GM10248 (cell line): ENCODE measurements at regions of chr1 and their contacts with region 1.

Region 1: DNA sequence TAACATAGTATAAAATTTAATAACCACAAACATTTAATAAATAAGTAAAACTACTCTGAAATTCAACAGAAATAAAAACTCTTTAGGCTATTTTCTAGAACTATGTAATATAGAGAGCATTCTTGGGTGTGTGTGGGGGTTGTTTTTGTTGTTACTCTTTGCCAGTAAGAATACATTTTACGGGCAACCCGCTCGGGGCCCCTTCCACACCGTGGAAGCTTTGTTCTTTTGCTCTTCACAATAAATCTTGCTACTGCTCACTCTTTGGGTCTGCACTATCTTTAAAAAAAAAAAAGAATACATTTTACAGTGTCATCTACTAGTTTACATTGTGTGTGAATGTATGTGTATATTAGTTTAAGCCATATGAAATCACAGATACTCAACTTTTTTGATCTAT is 16.0 kb upstream of the GIPC2 start:
- DNase-seq: no peak
- CTCF ChIP-seq: no peak

Region 2: GRCh38 chr1:78011050-78011449 is 18.7 kb before region 1 on chr1:
- CTCF ChIA-PET with region 1: no interaction called
- POLR2A ChIA-PET with region 1: no interaction called
- DNase-seq: no peak
- CTCF ChIP-seq: no peak

Region 3: GRCh38 chr1:78048446-78048845 is 18.7 kb after region 1 on chr1:
- CTCF ChIA-PET with region 1: interaction called, 11 read pairs
- POLR2A ChIA-PET with region 1: no interaction called
- DNase-seq: no peak
- CTCF ChIP-seq: no peak

Region 4: GRCh38 chr1:78081980-78082860 is 52.4 kb after region 1 on chr1:
- CTCF ChIA-PET with region 1: no interaction called
- POLR2A ChIA-PET with region 1: no interaction called
- DNase-seq: no peak
- CTCF ChIP-seq: no peak

Region 5: GRCh38 chr1:78101514-78101913 is 71.7 kb after region 1 on chr1:
- CTCF ChIA-PET with region 1: no interaction called
- POLR2A ChIA-PET with region 1: no interaction called
- DNase-seq: no peak
- CTCF ChIP-seq: no peak

Region 6: DNA sequence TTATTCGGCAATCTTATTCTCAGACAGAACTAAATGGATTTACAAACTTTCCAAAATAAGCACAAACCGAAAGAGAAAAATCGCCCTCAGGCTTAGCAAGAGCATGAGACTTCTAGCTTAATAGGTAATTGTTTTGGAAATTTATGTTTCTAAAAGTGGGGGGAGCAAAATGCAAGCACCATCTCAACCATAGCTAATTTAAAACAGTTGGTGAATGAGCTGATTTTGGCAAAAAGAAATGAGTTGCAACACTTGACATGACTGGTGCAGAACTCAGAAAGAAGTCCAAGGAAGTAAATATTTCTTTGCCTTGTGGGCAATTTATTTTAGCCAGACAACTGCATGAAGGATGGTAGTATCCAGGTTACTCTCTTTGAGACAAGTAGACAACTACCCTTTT is 389.5 kb after region 1 on chr1:
- CTCF ChIA-PET with region 1: no interaction called
- POLR2A ChIA-PET with region 1: no interaction called
- DNase-seq: no peak
- CTCF ChIP-seq: no peak